H1 (cell line): ENCODE measurements at regions of chr7 and their contacts with region 1.

Region 1: GRCh38 chr7:128919881-128920799 is 9.6 kb upstream of the KCP start:
- DNase-seq: peak in 1 of 2 experiments; percentile 57
- H3K4me3 ChIP-seq: no peak overlapping the region
- H3K27ac ChIP-seq: no peak overlapping the region
- H3K4me1 ChIP-seq: peaks cover 2 to 12% (median 3%) of the 10 kb centered on the region in 4 experiments; a peak in 4 of 7 replicates
- H3K27me3 ChIP-seq: peaks cover 16 to 25% (median 24%) of the 10 kb centered on the region in 4 experiments
- CTCF ChIP-seq: peak; percentile 22 to 27 (median 24)
- EP300 ChIP-seq: no peak
- POLR2A ChIP-seq: no peak
- RAD21 ChIP-seq: peak; percentile 26 to 52; a peak in 3 of 4 replicates

Region 2: DNA sequence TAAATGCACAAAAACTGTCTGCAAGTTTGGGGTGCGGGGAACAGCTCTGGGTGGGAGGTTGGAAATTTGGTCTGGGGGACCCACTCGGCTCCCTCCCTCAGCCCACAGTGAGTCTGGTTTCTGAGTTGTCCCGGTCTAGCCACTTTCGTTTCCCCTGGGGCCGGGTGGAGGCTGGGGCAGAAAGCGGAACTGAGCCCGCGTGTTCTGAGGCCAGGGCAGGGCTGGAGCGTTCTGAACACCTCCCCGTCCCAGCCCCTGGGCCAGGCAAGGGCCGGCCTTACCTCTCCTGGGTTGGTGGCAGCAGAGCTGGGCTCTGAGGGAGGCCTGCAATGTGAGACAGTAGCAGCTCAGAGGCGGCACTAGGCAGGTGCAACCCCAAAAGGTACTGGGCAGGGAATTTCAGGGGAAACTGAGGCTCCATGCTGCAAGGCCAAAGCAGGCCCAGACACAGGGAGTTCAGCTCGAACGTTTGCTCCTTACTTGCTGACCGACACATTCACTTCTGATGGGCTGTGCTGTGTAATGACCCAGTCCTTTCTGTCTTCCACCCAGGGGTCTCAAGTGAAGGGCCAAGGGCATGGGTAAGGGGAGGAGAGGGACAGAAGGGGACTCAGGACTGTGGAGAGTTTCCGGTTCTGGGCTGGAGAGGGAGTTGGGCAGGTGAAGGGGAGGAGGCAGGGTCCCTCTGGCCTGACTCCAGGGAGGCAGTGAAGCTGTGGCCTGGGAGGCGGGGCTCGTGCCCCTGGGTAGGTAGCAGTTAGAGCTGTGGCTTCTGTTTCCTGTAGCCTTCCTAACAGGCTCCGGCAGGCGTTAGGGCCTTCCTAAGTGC is 20.6 kb after region 1 on chr7:
- CTCF ChIA-PET with region 1: interaction called, 10 read pairs
- POLR2A ChIA-PET with region 1: no interaction called
- DNase-seq: peak in 1 of 2 experiments; percentile 50
- H3K4me3 ChIP-seq: no peak overlapping the region
- H3K27ac ChIP-seq: no peak overlapping the region
- H3K4me1 ChIP-seq: peaks cover 0 to 7% (median 3%) of the 10 kb centered on the region in 4 experiments; a peak in 2 of 7 replicates
- H3K27me3 ChIP-seq: peaks cover 24 to 49% (median 37%) of the 10 kb centered on the region in 4 experiments
- CTCF ChIP-seq: no peak
- EP300 ChIP-seq: no peak
- POLR2A ChIP-seq: no peak
- RAD21 ChIP-seq: no peak